K562 (cell line): ENCODE measurements at regions of chr3 and their contacts with region 1.

Region 1: DNA sequence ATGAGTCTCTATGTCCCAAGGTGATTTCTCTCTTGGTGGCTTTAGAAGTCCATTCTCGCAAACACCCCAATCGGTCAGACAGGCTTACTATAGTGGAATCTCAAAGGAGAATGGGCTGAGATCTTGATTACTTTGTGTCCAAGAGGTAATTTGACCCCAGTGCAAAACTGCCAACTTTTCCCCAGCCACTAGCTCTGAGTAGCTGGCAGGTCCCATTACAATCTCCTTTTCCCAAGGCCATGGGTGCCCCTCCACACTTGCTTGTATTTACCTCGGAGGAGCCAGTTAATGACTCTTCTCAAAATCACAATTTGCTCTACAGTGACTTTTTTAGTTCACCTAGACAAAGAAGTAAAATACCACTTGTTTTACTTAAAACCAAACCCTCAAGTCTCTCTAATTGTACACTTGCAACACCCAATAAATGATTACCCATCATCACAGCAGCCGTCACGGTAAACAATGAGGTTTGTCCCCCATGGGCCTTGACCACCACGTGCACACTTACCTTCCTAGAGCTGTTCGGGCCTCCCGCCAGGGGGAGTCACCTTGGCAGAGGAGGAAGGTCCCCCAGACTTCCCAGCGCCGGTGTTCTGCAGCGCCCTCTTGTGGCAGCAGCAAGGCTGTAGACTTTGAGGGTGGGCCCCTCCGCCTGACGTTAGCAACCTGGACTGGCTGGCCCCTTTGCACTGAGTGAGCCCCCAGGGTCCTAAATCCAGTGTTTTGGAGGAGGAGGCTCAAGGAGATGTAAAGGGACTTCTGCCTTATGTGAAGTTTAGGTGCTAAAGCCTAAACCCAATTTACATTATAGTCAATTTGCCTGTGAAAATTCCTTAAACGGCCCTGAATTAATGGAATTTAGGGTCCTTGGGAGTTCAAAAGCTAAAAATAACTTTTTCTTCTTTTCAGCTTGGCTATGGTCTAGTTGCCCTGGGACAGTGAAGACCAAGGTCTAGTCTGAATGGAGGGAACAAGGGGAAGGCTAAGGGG is 18.6 kb upstream of the HDAC11 start:
- DNase-seq: peak; percentile 90 to 95 (median 94)
- ATAC-seq: peak; percentile 98
- H3K4me3 ChIP-seq: no peak overlapping the region
- H3K27ac ChIP-seq: no peak overlapping the region
- H3K4me1 ChIP-seq: peaks cover 4 to 14% of the 10 kb centered on the region in 2 experiments; a peak in 4 of 5 replicates
- H3K27me3 ChIP-seq: peaks cover 6 to 25% of the 10 kb centered on the region in 2 experiments; a peak in 3 of 5 replicates
- CTCF ChIP-seq: peak; percentile 94 to 99 (median 98)
- EP300 ChIP-seq: no peak
- POLR2A ChIP-seq: no peak
- RAD21 ChIP-seq: peak; percentile 79 to 91

Region 2: GRCh38 chr3:13200946-13201345 is 260.5 kb before region 1 on chr3:
- CTCF ChIA-PET with region 1: no interaction called
- POLR2A ChIA-PET with region 1: no interaction called
- in situ Hi-C with region 1: no loop called
- intact Hi-C with region 1: loop called (anchors 5 kb)
- DNase-seq: peak in 2 of 4 experiments; percentile 42 to 49
- ATAC-seq: peak; percentile 71
- H3K4me3 ChIP-seq: no peak overlapping the region
- H3K27ac ChIP-seq: no peak overlapping the region
- H3K4me1 ChIP-seq: peaks cover 0 to 13% of the 10 kb centered on the region in 2 experiments; a peak in 2 of 5 replicates
- H3K27me3 ChIP-seq: peaks cover 63 to 86% of the 10 kb centered on the region in 2 experiments
- CTCF ChIP-seq: peak; percentile 38 to 56 (median 52); a peak in 5 of 6 replicates
- EP300 ChIP-seq: no peak
- POLR2A ChIP-seq: no peak
- RAD21 ChIP-seq: peak in 1 of 2 experiments; percentile 59; a peak in 2 of 4 replicates

Region 3: DNA sequence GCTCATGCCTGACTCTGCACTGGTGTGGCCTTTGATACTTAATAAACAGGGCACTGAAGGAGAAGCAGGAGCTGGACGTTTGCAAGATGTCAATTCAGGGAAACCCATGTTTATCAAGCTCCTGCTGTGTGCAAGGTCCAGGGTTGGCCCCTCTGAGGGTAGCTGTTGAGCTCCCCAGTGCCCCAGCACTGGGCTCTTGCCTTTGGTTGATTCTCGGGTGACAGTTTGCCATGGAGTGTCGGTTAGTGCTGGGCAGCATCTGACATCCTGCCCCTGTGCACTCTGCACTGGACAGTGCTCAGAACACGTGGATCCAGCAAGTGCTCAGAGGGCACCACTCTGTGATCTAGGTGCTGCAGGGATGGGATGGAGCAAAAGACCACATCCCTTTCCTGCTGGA is 25.9 kb after region 1 on chr3:
- CTCF ChIA-PET with region 1: no interaction called
- POLR2A ChIA-PET with region 1: no interaction called
- in situ Hi-C with region 1: no loop called
- intact Hi-C with region 1: no loop called
- DNase-seq: no peak
- ATAC-seq: no peak
- H3K4me3 ChIP-seq: no peak overlapping the region
- H3K27ac ChIP-seq: no peak overlapping the region
- H3K4me1 ChIP-seq: peaks cover 17 to 38% of the 10 kb centered on the region in 2 experiments
- H3K27me3 ChIP-seq: no peaks in the 10 kb centered on the region
- CTCF ChIP-seq: no peak
- EP300 ChIP-seq: no peak
- POLR2A ChIP-seq: no peak
- RAD21 ChIP-seq: no peak